Transverse colon (tissue), 4 donors: ENCODE measurements at regions of chr6 and their contacts with region 1.

Region 1: DNA sequence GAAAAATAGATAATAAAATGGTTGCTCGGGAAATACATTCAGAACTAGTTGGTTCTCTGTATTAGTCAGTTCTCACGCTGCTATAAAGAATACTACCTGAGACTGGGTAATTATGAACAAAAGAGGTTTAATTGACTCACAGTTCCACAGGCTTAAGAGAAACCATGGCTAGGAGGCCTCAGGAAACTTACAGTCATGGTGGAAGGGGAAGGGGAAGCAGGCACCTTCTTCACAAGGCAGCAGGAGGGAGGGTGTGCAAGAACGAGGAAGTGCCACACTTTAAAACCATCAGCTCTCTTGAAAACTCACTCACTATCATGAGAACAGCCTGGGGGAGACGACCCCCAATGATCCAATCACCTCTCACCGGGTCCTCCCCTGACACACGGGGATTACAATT is 24.2 kb upstream of the SNX9 start:
- DNase-seq: no peak
- H3K4me3 ChIP-seq: no peak overlapping the region
- H3K27ac ChIP-seq: no peak overlapping the region
- H3K4me1 ChIP-seq: no peaks in the 10 kb centered on the region
- H3K27me3 ChIP-seq: no peaks in the 10 kb centered on the region
- CTCF ChIP-seq: no peak
- EP300 ChIP-seq: no peak
- POLR2A ChIP-seq: no peak

Region 2: GRCh38 chr6:156599978-156600590 is 1198.8 kb before region 1 on chr6:
- in situ Hi-C with region 1: no loop called
- intact Hi-C with region 1: loop called (anchors 5 kb)
- DNase-seq: no peak
- H3K4me3 ChIP-seq: no peak overlapping the region
- H3K27ac ChIP-seq: peak overlapping the region in 3 of 4 donors; percentile 26 to 62 (median 49)
- H3K4me1 ChIP-seq: peaks cover 0 to 11% (median 0%) of the 10 kb centered on the region in 4 donors
- H3K27me3 ChIP-seq: no peaks in the 10 kb centered on the region
- CTCF ChIP-seq: no peak
- EP300 ChIP-seq: peak; percentile 43
- POLR2A ChIP-seq: no peak

Region 3: DNA sequence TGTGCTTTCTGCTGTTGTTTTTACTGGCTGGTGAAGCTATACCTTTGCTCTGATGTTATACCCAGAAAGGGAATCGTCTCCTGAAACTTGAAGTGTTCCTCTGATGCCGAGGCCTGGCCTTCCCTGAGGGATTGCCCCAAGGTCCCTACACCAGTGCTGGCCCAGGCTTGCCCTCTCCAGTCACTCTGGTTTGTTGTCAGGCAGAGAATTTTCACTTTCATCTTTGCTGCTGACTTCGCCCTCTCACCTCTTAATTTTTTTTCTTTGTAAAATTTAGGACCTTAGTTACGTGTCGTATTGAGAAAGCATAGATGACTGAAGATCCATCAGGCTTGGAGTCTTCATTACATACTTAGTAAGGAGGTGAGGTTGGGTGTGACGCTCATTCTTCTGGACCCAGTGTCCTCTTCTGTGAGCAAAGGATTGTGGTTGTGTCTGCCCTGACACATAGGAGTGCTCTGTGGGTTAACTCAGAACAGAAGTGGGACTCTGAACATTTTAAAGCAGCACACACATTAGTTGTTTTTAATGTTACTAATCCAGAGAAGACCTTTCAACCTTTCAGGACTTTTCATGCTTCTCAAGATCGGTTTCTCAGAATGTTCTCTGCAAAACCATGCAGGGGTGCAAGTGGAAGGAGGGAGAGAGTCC is 558.8 kb after region 1 on chr6:
- in situ Hi-C with region 1: no loop called
- intact Hi-C with region 1: no loop called
- DNase-seq: no peak
- H3K4me3 ChIP-seq: no peak overlapping the region
- H3K27ac ChIP-seq: no peak overlapping the region
- H3K4me1 ChIP-seq: peaks cover 0 to 21% (median 8%) of the 10 kb centered on the region in 4 donors
- H3K27me3 ChIP-seq: no peaks in the 10 kb centered on the region
- CTCF ChIP-seq: no peak
- EP300 ChIP-seq: no peak
- POLR2A ChIP-seq: no peak